ENCODE measurements at regions of chr16 and their contacts with region 1.

Region 1: DNA sequence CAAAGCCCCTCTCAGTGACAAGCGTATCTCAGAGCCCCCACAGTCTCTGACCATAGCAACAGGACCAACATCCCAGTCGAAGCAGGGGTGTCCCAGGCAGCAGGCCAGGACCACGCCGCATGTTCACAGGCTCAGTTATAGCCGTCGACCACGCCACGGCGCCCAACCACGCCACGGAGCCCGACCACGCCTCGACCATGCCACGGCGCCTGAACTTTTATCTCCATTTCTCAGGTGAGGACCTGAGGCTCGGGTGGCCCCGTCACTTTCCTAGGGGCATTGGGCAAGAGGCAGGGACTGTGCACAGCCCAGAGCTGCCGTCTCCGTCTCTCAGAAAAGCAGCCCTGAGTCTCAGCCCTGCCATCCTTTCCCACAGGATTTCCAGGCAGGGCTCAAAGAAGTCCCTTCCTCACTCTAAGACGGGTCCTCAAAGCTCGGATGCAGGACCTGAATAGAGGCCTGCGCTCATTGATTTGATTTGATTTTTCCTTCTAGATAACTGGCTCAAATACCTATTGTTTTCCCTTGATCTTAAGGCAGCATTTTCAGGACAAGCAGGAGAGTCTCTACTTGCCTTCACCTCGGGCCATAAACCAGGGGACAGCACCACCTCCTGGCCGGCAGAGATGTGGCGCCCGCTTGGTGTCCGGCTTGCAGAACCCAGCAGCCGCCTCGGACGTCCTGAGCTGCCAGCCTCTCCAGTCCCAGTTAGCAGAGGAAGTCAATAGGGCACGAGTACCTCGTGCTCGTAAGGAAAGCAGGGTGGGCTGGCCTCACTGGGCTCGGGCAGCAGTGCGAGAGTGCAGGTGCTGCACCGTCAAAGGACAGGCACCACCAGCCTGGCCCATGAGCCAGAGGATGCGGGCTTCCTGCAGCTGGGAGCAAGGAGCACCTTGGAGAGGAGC is 38.7 kb downstream of the C16orf95 start:
- H3K4me3 Mint-ChIP-seq: no peak overlapping the region
- H3K27ac Mint-ChIP-seq: no peak overlapping the region
- H3K4me1 Mint-ChIP-seq: peaks cover 10% of the 10 kb centered on the region
- H3K27me3 Mint-ChIP-seq: peaks cover 27% of the 10 kb centered on the region

Region 2: DNA sequence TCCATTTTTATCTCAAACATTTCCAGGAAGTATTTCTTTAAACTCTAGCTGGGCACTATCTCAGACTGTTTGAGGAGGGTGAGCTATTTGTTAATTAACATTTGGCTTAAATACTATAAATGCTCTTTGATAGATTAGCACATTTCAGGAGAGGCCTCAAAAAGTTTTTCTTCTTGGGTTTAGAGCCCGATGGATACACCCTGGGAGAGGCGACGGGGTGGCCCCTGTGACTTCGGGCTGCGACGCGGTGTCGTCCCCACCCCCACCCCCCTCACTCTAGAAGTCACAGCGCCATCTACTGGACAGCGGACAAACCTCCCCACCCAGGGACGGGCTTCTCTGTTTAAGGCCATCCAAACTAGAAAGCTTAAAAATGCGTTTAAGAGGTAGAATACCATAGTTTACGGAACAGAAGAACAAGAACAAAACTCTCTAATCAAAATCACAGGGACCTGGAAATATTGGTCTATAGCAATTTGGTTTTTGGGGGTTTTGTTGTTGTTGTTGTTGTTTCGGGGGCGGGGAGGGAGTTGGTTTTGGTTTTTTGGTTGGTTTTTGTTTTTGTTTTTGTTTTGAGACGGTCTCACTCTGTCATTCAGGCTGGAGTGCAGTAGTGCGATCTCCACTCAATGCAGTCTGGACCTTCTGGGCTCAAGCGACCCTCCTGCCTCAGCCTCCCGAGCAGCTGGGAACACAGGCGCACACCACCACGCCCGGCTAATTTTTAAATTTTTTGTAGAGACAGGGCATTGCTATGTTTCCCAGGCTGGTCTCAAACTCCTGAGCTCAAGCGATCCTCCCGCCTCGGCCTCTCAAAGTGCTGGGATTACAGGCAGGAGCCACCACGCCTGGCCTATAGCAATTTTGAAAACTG is 215.6 kb before region 1 on chr16:
- intact Hi-C with region 1: loop called (anchors 5 kb)
- H3K4me3 Mint-ChIP-seq: peak overlapping the region; percentile 13
- H3K27ac Mint-ChIP-seq: no peak overlapping the region
- H3K4me1 Mint-ChIP-seq: peaks cover 48% of the 10 kb centered on the region
- H3K27me3 Mint-ChIP-seq: peaks cover 4% of the 10 kb centered on the region

Region 3: GRCh38 chr16:87358696-87359095 is 80.3 kb after region 1 on chr16:
- intact Hi-C with region 1: no loop called
- H3K4me3 Mint-ChIP-seq: no peak overlapping the region
- H3K27ac Mint-ChIP-seq: no peak overlapping the region
- H3K4me1 Mint-ChIP-seq: no peaks in the 10 kb centered on the region
- H3K27me3 Mint-ChIP-seq: peaks cover 62% of the 10 kb centered on the region

Region 4: GRCh38 chr16:87571136-87571867 is 292.9 kb after region 1 on chr16:
- intact Hi-C with region 1: no loop called
- H3K4me3 Mint-ChIP-seq: no peak overlapping the region
- H3K27ac Mint-ChIP-seq: no peak overlapping the region
- H3K4me1 Mint-ChIP-seq: no peaks in the 10 kb centered on the region
- H3K27me3 Mint-ChIP-seq: peaks cover 31% of the 10 kb centered on the region

Measured in dendritic cell treated with granulocyte-macrophage colony-stimulating factor and Interleukin-4, amounts not matched to agents 40 ng/mL and 50 ng/mL, for 4 days (primary cell).